HepG2 (cell line): ENCODE measurements at regions of chr15 and their contacts with region 1.

Region 1: GRCh38 chr15:24956111-24956838 is 1.5 kb downstream of the SNRPN start:
- DNase-seq: peak; percentile 59
- ATAC-seq: peak; percentile 84
- H3K4me3 ChIP-seq: peak overlapping the region; percentile 82 to 96 (median 90)
- H3K27ac ChIP-seq: peak overlapping the region; percentile 76
- H3K4me1 ChIP-seq: peaks cover 44% of the 10 kb centered on the region
- H3K27me3 ChIP-seq: no peaks in the 10 kb centered on the region; a peak in 1 of 5 replicates
- CTCF ChIP-seq: no peak
- EP300 ChIP-seq: no peak
- POLR2A ChIP-seq: peak; percentile 52 to 53
- RAD21 ChIP-seq: no peak

Region 2: GRCh38 chr15:24856397-24857390 is 99.6 kb before region 1 on chr15:
- CTCF ChIA-PET with region 1: no interaction called
- POLR2A ChIA-PET with region 1: no interaction called
- in situ Hi-C with region 1: no loop called
- intact Hi-C with region 1: no loop called
- DNase-seq: no peak
- ATAC-seq: no peak
- H3K4me3 ChIP-seq: no peak overlapping the region
- H3K27ac ChIP-seq: no peak overlapping the region
- H3K4me1 ChIP-seq: peaks cover 16% of the 10 kb centered on the region
- H3K27me3 ChIP-seq: no peaks in the 10 kb centered on the region; a peak in 2 of 5 replicates
- CTCF ChIP-seq: no peak
- EP300 ChIP-seq: no peak
- POLR2A ChIP-seq: no peak
- RAD21 ChIP-seq: no peak

Region 3: DNA sequence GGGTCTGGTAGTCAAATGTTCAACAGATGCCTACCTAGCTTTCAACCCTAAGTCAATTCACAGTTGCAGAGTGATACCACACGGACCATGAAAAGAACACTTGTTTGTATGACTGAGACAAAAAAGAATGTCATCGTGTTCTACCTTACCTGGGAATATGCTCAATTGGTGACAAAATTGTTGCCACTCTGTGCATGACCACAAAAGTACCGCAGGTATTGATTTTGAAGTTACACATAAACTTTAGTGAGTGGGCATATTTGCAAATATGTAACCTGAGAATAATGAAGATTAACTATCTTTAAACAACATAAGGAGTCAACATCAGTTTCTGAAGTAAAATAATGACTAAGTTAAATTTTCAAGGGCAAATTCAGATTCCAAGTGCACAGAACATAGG is 54.9 kb before region 1 on chr15:
- CTCF ChIA-PET with region 1: no interaction called
- POLR2A ChIA-PET with region 1: interaction called, 4 read pairs
- in situ Hi-C with region 1: no loop called
- intact Hi-C with region 1: loop called (anchors 5 kb)
- DNase-seq: peak; percentile 20
- ATAC-seq: peak; percentile 91
- H3K4me3 ChIP-seq: no peak overlapping the region
- H3K27ac ChIP-seq: no peak overlapping the region
- H3K4me1 ChIP-seq: peaks cover 33% of the 10 kb centered on the region
- H3K27me3 ChIP-seq: no peaks in the 10 kb centered on the region; a peak in 1 of 5 replicates
- CTCF ChIP-seq: no peak
- EP300 ChIP-seq: peak in 1 of 2 experiments; percentile 57; a peak in 1 of 4 replicates
- POLR2A ChIP-seq: no peak
- RAD21 ChIP-seq: no peak

Region 4: GRCh38 chr15:24919446-24919845 is 36.8 kb before region 1 on chr15:
- CTCF ChIA-PET with region 1: no interaction called
- POLR2A ChIA-PET with region 1: interaction called, 3 read pairs
- in situ Hi-C with region 1: no loop called
- intact Hi-C with region 1: loop called (anchors 2 kb)
- DNase-seq: no peak
- ATAC-seq: no peak
- H3K4me3 ChIP-seq: no peak overlapping the region
- H3K27ac ChIP-seq: no peak overlapping the region
- H3K4me1 ChIP-seq: peaks cover 38% of the 10 kb centered on the region
- H3K27me3 ChIP-seq: no peaks in the 10 kb centered on the region
- CTCF ChIP-seq: no peak
- EP300 ChIP-seq: no peak
- POLR2A ChIP-seq: no peak
- RAD21 ChIP-seq: no peak

Region 5: DNA sequence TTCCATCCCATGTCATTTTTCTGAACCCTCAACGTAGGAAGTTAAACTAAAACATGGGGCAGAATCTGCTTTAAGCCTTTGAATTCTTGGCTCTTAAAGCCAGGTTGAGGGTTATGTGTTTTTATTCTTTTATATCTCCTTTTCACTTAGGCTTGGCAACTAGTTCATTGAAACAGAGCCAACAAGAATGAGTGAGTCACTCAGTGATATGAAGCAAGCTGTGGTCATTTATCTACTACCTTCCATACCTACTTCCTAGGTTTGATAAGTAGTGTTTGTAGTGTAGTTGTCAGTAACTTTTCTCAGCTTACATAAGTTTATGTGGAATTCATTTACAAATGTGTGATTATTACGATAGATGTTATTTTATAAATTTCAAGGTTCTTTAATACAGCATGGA is 66.0 kb after region 1 on chr15:
- CTCF ChIA-PET with region 1: no interaction called
- POLR2A ChIA-PET with region 1: no interaction called
- in situ Hi-C with region 1: no loop called
- intact Hi-C with region 1: no loop called
- DNase-seq: no peak
- ATAC-seq: no peak
- H3K4me3 ChIP-seq: no peak overlapping the region
- H3K27ac ChIP-seq: no peak overlapping the region
- H3K4me1 ChIP-seq: no peaks in the 10 kb centered on the region
- H3K27me3 ChIP-seq: no peaks in the 10 kb centered on the region
- CTCF ChIP-seq: no peak
- EP300 ChIP-seq: no peak
- POLR2A ChIP-seq: no peak
- RAD21 ChIP-seq: no peak

Region 6: GRCh38 chr15:25208735-25209134 is 252.5 kb after region 1 on chr15:
- CTCF ChIA-PET with region 1: no interaction called
- POLR2A ChIA-PET with region 1: no interaction called
- in situ Hi-C with region 1: no loop called
- intact Hi-C with region 1: no loop called
- DNase-seq: no peak
- ATAC-seq: no peak
- H3K4me3 ChIP-seq: no peak overlapping the region
- H3K27ac ChIP-seq: no peak overlapping the region
- H3K4me1 ChIP-seq: no peaks in the 10 kb centered on the region
- H3K27me3 ChIP-seq: no peaks in the 10 kb centered on the region
- CTCF ChIP-seq: no peak
- EP300 ChIP-seq: no peak
- POLR2A ChIP-seq: no peak
- RAD21 ChIP-seq: no peak